Breast epithelium (tissue), 4 donors: ENCODE measurements at regions of chr21 and their contacts with region 1.

Region 1: GRCh38 chr21:18449605-18450550 is 46.3 kb upstream of the TMPRSS15 start:
- DNase-seq: no peak
- H3K4me3 ChIP-seq: no peak overlapping the region
- H3K27ac ChIP-seq: no peak overlapping the region
- H3K4me1 ChIP-seq: no peaks in the 10 kb centered on the region
- H3K27me3 ChIP-seq: no peaks in the 10 kb centered on the region
- CTCF ChIP-seq: no peak
- POLR2A ChIP-seq: no peak

Region 2: GRCh38 chr21:18298228-18298627 is 151.7 kb before region 1 on chr21:
- intact Hi-C with region 1: loop called (anchors 10 kb)
- DNase-seq: no peak
- H3K4me3 ChIP-seq: no peak overlapping the region
- H3K27ac ChIP-seq: no peak overlapping the region
- H3K4me1 ChIP-seq: no peaks in the 10 kb centered on the region
- H3K27me3 ChIP-seq: no peaks in the 10 kb centered on the region
- CTCF ChIP-seq: no peak
- POLR2A ChIP-seq: no peak